Panc1 (cell line): ENCODE measurements at regions of chr10 and their contacts with region 1.

Region 1: GRCh38 chr10:45594276-45595106 is 78.1 kb downstream of the ZFAND4 start:
- DNase-seq: peak; percentile 60
- ATAC-seq: peak; percentile 96
- H3K4me3 ChIP-seq: peak overlapping the region; percentile 84 to 87
- H3K27ac ChIP-seq: peak overlapping the region; percentile 92
- H3K4me1 ChIP-seq: peaks cover 18% of the 10 kb centered on the region
- H3K27me3 ChIP-seq: no peaks in the 10 kb centered on the region
- CTCF ChIP-seq: peak; percentile 34

Region 2: DNA sequence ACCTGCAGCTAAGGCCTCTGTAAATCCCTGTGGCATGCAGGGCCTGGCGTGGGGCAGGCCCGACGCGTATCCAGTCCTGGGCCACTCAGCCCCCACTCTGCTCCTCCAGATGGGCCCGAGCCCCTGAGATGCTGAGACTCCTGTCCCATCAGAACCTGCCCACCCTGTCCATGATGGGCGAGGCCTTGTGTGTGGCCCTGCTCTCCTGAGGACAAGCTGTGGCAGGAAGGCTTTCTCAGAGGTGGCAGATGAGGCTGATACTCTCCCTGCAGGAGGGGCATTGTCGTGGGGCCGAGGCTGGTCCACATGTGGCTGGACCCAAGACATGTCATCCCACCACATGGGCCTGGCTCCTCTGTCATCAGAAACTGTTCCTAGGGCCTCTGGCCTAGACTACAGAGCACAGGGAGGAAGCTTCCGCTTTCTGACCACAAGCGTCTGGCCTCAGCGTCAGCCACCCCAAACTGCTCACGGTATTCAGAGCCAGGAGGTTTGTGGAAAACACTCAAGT is 214.5 kb before region 1 on chr10:
- CTCF ChIA-PET with region 1: no interaction called
- POLR2A ChIA-PET with region 1: no interaction called
- in situ Hi-C with region 1: no loop called
- intact Hi-C with region 1: no loop called
- DNase-seq: no peak
- ATAC-seq: no peak
- H3K4me3 ChIP-seq: no peak overlapping the region
- H3K27ac ChIP-seq: no peak overlapping the region
- H3K4me1 ChIP-seq: no peaks in the 10 kb centered on the region
- H3K27me3 ChIP-seq: peaks cover 13% of the 10 kb centered on the region
- CTCF ChIP-seq: no peak

Region 3: DNA sequence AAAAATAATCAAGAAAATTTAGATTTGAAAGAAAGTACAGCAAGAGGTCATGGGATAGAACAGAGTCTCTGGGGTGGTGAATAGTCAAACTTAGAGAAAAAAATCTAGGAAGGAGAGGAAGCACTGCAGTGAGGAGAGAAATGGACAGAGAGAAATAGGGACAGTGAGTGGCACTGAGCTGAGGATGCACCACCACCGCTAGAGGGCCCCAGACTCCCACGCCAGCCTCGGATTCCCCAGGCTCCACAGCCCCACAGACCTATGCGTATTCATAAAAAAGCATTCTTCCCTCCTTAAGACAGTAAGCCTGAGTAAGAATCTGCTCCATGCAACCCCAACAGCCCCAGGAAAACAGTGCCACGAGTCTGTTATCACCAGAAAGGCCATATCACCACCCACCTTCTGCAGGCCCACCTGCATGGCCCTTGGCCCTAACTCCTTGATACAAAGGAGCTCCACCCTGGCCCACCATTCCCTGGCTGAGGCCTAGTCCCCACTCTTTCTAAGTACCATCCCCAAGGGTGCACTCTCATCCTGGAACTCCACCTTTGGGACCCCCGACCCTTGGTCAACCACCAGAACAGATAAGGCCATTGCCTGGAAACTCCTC is 129.4 kb before region 1 on chr10:
- CTCF ChIA-PET with region 1: no interaction called
- POLR2A ChIA-PET with region 1: no interaction called
- in situ Hi-C with region 1: no loop called
- intact Hi-C with region 1: loop called (anchors 5 kb)
- DNase-seq: peak; percentile 50
- ATAC-seq: peak; percentile 98
- H3K4me3 ChIP-seq: no peak overlapping the region
- H3K27ac ChIP-seq: peak overlapping the region; percentile 52
- H3K4me1 ChIP-seq: peaks cover 39% of the 10 kb centered on the region
- H3K27me3 ChIP-seq: no peaks in the 10 kb centered on the region
- CTCF ChIP-seq: peak; percentile 99